SK-N-SH (cell line): ENCODE measurements at regions of chr3 and their contacts with region 1.

Region 1: DNA sequence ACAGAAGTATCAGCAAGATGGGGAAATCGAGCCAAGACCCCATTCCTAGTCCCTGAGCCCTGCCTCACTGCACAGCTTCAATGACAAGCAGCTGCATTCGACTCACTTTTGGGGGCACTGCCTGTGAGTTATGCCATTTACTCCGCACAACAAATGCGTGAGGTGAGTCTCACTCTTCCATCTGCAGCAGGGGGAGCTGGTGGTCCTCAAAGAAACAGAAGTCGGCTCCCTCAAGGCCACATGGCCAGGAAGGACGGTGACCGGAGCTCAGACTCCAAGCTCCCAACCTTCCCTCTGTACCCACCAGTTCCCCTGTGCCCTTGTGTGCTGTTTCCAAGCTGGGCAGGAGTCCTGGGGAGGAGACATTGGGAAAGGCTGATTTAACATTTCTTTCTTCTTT is 127.7 kb upstream of the IQSEC1 start:
- DNase-seq: peak; percentile 74
- H3K4me3 ChIP-seq: no peak overlapping the region
- H3K27ac ChIP-seq: no peak overlapping the region
- H3K4me1 ChIP-seq: peaks cover 0 to 3% of the 10 kb centered on the region in 2 experiments; a peak in 1 of 4 replicates
- H3K27me3 ChIP-seq: no peaks in the 10 kb centered on the region; the same call in 1 of the 2 replicates
- CTCF ChIP-seq: peak; percentile 24
- EP300 ChIP-seq: no peak
- RAD21 ChIP-seq: peak; percentile 72

Region 2: DNA sequence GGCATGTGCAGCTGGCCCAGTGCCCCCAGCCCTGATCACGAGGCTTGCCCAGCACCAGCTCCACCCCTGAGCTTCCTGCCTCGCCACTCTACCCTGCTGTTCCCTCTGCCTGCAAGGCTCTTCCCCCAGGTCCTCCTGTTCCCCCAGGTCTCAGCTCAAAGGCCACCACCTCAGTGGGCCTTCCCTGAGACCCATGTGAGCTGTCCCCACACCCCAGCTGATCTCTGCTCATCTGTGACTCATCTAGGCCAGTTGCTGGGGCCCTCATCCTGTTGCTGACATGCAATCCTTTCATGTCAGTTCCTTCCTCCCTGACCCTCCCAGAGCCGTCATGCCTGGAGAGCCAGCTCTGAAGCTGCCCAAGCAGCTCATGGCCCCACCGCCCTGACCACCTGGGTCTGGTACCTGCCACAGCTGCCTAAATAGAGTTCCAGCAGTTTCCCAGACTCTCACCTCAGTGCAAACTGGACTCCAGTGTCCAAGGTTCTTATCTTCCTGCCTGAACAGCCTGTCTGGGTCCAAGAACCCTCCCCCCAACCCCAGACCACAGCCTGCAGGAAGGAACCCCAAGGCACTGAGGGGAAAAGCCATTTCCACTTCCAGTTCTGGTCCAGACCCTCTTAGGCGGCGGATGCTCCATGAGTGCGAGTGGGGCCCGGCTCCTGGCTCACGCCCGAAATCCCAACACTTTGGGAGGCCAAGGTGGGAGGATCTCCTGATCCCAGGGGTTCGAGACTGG is 11.1 kb before region 1 on chr3:
- CTCF ChIA-PET with region 1: interaction called, 10 read pairs
- POLR2A ChIA-PET with region 1: no interaction called
- DNase-seq: no peak
- H3K4me3 ChIP-seq: no peak overlapping the region
- H3K27ac ChIP-seq: no peak overlapping the region
- H3K4me1 ChIP-seq: peaks cover 0 to 16% of the 10 kb centered on the region in 2 experiments; a peak in 1 of 4 replicates
- H3K27me3 ChIP-seq: no peaks in the 10 kb centered on the region
- CTCF ChIP-seq: no peak
- EP300 ChIP-seq: no peak
- RAD21 ChIP-seq: no peak

Region 3: DNA sequence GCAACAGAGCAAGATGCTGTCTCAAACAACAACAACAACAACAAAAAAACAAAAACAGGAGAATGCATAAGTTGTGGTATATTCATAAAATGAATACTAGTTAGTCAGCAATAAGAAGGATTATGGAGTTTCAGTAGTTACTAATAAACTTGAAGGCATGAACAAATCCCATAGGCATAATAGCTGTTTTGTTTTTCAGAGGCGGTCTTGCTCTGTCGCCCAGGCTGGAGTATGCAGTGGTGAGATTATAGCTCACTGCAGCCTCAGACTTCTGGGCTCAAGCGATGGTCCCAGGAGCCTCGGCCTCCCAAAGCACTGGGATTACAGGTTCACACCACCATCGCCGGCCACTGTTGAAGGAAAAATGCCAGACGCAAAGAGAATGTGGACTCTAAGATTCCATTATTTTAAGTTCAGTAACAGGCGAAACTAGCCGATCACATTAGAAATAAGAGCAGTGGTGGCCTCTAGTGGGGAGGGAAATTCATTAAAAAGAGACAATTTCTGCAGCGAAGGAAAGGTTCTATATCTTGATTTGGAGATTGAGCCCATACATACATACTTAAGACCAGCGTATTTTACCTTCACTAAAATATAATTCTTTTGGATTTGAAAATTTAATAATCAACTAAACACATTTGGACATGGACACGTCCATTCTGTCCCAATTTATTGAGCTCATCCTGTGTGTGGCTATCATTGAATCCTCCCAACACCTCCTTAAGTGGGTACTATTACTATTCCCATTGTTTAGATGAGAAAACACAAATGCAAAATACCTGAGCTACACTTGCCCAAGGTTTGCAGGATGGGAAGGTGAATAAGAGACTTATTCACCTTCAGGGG is 251.8 kb after region 1 on chr3:
- CTCF ChIA-PET with region 1: interaction called, 10 read pairs
- POLR2A ChIA-PET with region 1: no interaction called
- DNase-seq: peak; percentile 59
- H3K4me3 ChIP-seq: peak overlapping the region; percentile 12 to 66; a peak in 3 of 4 replicates
- H3K27ac ChIP-seq: peak overlapping the region; percentile 27 to 31; a peak in 2 of 4 replicates
- H3K4me1 ChIP-seq: no peaks in the 10 kb centered on the region; a peak in 1 of 4 replicates
- H3K27me3 ChIP-seq: no peaks in the 10 kb centered on the region
- CTCF ChIP-seq: peak; percentile 75
- EP300 ChIP-seq: no peak
- RAD21 ChIP-seq: peak; percentile 82